ENCODE measurements at regions of chr2 and their contacts with region 1.

Region 1: GRCh38 chr2:101823347-101823791 is 125.9 kb downstream of the MAP4K4 start:
- DNase-seq: peak; percentile 13 to 42
- ATAC-seq: peak; percentile 73 to 77
- H3K4me3 ChIP-seq: no peak overlapping the region
- H3K27ac ChIP-seq: no peak overlapping the region
- H3K4me1 ChIP-seq: peaks cover 15 to 17% of the 10 kb centered on the region in 2 donors
- H3K27me3 ChIP-seq: no peaks in the 10 kb centered on the region
- CTCF ChIP-seq: peak; percentile 24 to 67 (median 48)
- POLR2A ChIP-seq: no peak

Region 2: GRCh38 chr2:101518578-101519492 is 304.5 kb before region 1 on chr2:
- in situ Hi-C with region 1: loop called in 3 of 4 experiments (anchors 5 to 25 kb)
- intact Hi-C with region 1: no loop called
- DNase-seq: peak; percentile 16 to 37
- ATAC-seq: peak; percentile 84 to 93
- H3K4me3 ChIP-seq: no peak overlapping the region
- H3K27ac ChIP-seq: peak overlapping the region in 1 of 4 donors; percentile 7
- H3K4me1 ChIP-seq: peaks cover 0 to 9% of the 10 kb centered on the region in 2 donors
- H3K27me3 ChIP-seq: no peaks in the 10 kb centered on the region
- CTCF ChIP-seq: peak in 4 of 5 experiments; percentile 6 to 59 (median 44)
- POLR2A ChIP-seq: no peak

Region 3: DNA sequence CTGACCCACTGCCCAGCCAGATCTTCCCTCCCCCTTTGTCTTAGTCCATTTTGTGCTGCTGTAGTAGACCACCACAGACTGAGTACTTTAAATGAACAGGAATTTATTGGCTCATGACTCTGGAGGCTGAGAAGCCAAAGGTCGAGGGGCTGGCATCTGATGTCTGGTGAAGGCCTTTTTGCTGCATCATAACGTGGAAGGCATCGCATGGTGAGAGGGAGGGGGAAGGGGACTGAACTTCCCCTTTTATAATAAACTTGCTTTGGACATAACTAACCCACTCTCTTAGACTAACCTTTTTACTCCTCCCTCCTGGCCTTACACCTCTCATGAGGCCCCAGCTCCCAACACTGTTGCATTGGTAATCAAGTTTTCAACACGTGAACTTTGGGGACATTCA is 42.0 kb before region 1 on chr2:
- in situ Hi-C with region 1: no loop called
- intact Hi-C with region 1: loop called (anchors 5 kb)
- DNase-seq: no peak
- ATAC-seq: no peak
- H3K4me3 ChIP-seq: no peak overlapping the region
- H3K27ac ChIP-seq: no peak overlapping the region
- H3K4me1 ChIP-seq: peaks cover 48 to 57% of the 10 kb centered on the region in 2 donors
- H3K27me3 ChIP-seq: no peaks in the 10 kb centered on the region
- CTCF ChIP-seq: no peak
- POLR2A ChIP-seq: no peak